MCF 10A (cell line): ENCODE measurements at regions of chr12 and their contacts with region 1.

Region 1: DNA sequence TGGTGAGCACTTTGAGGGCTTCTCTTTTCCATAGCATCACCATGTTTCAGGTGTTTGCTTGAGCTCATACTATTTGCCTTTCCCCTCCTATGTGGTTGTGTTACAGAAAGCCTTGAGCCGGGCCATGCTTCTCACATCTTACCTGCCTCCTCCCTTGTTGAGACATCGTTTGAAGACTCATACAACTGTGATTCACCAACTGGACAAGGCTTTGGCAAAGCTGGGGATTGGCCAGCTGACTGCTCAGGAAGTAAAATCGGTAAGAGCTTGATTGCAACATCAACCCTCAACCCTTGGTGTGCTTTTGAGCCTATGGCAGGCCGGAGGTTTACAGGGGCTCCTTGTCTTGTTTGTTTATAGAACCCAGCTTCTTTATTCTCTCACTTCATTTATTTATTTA is 8.1 kb downstream of the LETMD1 start:
- DNase-seq: peak; percentile 97
- H3K4me3 Mint-ChIP-seq: peak overlapping the region; percentile 3
- H3K27ac Mint-ChIP-seq: peak overlapping the region; percentile 3
- H3K4me1 Mint-ChIP-seq: peaks cover 15% of the 10 kb centered on the region
- H3K27me3 Mint-ChIP-seq: no peaks in the 10 kb centered on the region
- CTCF ChIP-seq: no peak

Region 2: DNA sequence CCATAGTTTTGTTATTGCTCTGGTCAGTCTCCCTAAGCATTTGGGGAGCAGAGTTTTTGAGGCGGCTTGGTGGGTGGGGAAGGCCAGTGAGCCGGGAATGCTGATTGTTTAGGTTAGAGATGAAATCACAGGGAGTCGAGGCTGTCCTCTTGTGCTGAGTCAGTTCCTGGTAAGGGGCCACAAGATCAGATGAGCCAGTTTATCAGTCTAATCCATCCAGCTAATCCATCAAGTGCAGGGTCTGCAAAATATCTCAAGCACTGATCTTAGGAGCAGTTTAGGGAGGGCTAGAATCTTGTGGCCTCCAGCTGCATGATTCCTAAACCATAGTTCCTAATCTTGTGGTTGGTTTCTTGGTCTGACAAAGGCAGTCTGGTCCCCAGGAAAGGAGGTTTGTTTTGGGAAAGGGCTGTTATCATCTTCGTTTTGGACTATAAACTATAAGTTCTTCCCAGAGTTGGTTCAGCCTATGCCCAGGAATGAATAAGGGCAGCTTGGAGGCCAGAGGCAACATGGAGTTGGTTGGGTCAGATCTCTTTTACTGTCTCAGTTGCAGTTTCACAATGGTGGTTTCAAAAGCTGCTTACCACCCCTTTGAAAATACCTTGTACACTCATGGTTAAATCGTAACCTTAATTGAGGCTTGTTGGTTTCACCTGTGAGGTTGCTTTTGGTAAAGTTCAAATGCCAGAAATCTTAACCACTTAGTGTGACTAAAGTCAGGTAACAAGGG is 137.5 kb before region 1 on chr12:
- CTCF ChIA-PET with region 1: no interaction called
- POLR2A ChIA-PET with region 1: no interaction called
- intact Hi-C with region 1: no loop called
- DNase-seq: no peak
- H3K4me3 Mint-ChIP-seq: no peak overlapping the region
- H3K27ac Mint-ChIP-seq: no peak overlapping the region
- H3K4me1 Mint-ChIP-seq: peaks cover 11% of the 10 kb centered on the region
- H3K27me3 Mint-ChIP-seq: no peaks in the 10 kb centered on the region
- CTCF ChIP-seq: no peak

Region 3: DNA sequence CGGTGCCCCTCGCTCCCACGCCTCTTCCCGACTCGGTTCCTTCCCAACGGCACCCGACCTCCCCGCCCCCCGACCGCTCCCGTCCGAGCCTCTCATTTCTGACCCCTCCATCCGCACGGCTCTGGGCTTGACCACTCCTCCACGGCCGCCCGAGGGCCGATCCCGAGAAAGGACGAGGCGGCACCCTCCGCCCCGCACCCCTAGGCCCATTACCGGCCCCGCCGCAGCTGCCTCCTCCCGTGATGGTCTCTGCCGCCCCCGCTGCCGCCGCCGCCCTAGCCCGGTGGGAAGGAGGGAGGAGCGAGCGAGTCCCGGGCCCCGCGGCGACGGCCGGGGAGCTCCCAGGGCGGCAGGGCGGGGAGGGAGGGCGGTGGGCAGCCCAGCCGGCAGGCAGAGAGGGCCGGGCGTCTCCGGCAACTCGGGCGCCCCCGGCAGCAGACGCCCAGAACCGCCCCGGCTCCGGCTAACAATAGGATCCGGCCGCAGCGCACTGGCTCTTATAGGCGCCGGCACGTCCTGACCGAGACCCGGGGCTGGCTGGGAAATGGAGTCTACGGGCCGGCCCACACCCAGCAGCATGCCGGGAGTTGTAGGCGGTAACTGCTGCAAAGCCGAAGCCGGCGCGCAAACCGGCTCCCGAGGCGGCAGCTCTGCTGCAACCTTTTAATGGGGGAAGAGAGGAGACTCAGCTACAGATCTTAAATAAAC is 27.0 kb after region 1 on chr12 and contains the start of gene CSRNP2:
- CTCF ChIA-PET with region 1: interaction called, 4 read pairs
- POLR2A ChIA-PET with region 1: interaction called, 31 read pairs
- intact Hi-C with region 1: no loop called
- DNase-seq: peak; percentile 93
- H3K4me3 Mint-ChIP-seq: peak within 1 kb of the TSS; percentile 88
- H3K27ac Mint-ChIP-seq: peak within 1 kb of the TSS; percentile 46
- H3K4me1 Mint-ChIP-seq: peaks cover 13% of the 10 kb centered on the region
- H3K27me3 Mint-ChIP-seq: no peaks in the 10 kb centered on the region
- CTCF ChIP-seq: no peak
- total RNA-seq, gene CSRNP2: 41.4 and 46.3 TPM in 2 replicates